Mucosa of descending colon (tissue), 3 donors: ENCODE measurements at regions of chr12 and their contacts with region 1.

Region 1: GRCh38 chr12:93569656-93570551 is 2.6 kb upstream of the SOCS2 start:
- DNase-seq: peak; percentile 89 to 92 (median 92)
- ATAC-seq: peak; percentile 77
- H3K4me3 ChIP-seq: peak overlapping the region; percentile 56
- H3K4me1 ChIP-seq: peaks cover 6% of the 10 kb centered on the region
- CTCF ChIP-seq: peak; percentile 84

Region 2: GRCh38 chr12:93624595-93625294 is 54.8 kb after region 1 on chr12:
- intact Hi-C with region 1: no loop called
- DNase-seq: no peak
- ATAC-seq: peak; percentile 44
- H3K4me3 ChIP-seq: no peak overlapping the region
- H3K4me1 ChIP-seq: no peaks in the 10 kb centered on the region
- CTCF ChIP-seq: no peak

Region 3: DNA sequence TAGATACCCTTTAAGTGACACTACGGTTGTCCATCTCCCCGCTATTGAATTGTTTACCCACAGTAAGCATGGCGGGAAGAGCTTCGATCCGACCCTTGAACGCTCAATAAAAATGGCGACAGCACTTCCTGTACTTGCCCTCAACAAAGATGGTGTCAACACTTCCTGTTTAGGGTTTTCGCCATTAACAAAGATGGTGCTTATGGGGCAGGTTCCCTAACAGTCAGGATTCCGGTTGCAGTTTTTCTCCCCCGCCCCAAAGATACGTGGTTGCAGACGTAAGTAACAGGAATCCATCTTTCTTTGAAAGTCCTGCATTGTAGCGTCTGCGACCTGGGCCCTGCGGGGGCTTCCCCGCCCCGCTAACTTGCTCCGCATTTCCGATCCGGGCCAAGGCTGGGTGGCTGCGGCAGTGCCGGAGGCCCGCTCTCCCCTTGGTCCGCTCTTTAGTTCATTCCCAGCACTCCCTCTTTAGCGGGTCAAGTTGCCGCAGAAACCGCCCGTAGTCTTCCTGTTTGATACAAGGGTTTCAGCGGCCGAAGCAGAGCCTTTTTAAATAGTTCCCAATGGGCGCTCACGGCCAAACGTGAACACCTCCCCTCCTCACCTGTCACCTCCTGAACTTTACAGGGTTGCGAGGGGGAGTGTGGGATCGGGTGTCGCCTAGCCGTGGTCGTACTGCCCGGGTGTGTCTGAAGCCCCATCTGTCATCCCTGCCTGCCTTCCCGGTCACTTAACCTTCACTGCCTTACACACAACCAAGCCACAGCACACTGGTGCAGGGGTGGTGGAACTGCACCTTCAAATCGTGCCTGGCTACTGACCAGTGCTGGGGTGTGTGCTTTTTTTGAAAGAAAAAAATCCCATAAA is 107.5 kb after region 1 on chr12 and contains the start of gene CRADD:
- intact Hi-C with region 1: loop called in 1 of 2 experiments (anchors 5 kb)
- DNase-seq: peak; percentile 80 to 86 (median 83)
- ATAC-seq: peak; percentile 97
- H3K4me3 ChIP-seq: peak within 1 kb of the TSS; percentile 27
- H3K4me1 ChIP-seq: peaks cover 4% of the 10 kb centered on the region
- CTCF ChIP-seq: no peak
- total RNA-seq, gene CRADD: 18.4 to 27.9 (median 22.7) TPM

Region 4: DNA sequence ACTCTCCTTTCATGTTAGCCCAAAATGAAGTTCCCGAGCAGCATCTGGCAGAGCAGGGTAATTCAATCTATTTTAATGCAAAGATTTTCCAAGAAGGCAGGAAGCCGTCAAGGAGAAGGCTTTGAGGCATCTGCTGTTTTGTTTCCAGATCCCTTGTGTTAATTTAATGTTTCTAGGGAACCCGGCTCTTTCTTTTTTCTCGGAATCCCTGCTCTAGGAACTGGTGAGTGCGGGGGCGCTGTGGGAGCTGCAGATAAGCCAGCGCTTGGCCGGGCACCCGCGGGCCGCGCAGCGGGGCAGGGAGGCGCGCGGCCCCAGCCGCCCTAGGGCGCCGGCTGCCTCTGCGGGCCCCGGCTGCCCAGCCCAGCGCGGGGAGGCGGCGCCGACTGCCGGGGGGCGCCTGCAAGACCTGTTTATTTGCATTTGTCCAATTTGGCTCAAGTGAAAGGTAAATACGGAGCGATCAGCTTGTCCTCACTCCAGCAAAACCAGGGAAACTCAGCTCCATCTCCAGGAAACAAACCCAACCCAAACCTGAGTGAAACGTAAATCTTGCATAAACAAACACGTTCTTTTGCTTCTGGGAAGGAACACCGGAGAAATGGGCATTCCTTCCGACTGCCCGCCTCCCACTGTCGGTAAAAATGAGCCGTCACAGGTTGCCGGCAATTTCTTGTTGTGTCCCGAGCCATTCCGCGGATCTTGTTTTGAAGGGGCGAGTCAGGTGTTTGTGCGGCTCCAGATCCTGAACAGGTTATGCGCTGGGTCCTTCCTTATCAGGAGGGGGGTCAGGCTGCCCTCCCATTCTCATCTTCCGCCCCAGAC is 172.4 kb after region 1 on chr12:
- intact Hi-C with region 1: loop called (anchors 5 kb)
- DNase-seq: peak; percentile 72 to 78 (median 75)
- ATAC-seq: peak; percentile 96
- H3K4me3 ChIP-seq: peak overlapping the region; percentile 30
- H3K4me1 ChIP-seq: peaks cover 9% of the 10 kb centered on the region
- CTCF ChIP-seq: no peak

Region 5: DNA sequence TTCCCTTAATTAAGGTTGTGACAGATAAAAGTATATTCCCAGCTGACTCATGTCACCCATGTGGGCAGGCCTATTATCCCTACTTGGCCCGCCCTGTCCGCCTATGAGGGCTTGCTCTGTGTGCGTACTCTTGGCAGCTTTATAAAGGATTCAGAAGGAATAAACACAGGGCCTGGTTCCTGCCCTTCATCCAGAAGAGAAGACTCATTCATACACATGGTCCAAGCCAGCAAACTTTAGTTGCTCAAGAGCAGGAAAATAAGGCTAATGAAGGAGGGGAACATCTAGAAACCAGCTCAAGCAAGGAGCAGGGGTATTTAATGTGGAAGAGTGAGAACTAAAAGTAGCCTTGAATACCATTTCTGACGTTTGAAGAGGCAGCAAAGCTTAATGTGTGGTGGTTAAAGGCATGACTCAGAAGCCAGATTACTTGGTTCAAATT is 249.2 kb after region 1 on chr12:
- intact Hi-C with region 1: no loop called
- DNase-seq: peak; percentile 25 to 56 (median 35)
- ATAC-seq: peak; percentile 72
- H3K4me3 ChIP-seq: no peak overlapping the region
- H3K4me1 ChIP-seq: no peaks in the 10 kb centered on the region
- CTCF ChIP-seq: no peak

Region 6: GRCh38 chr12:94074980-94075928 is 505.4 kb after region 1 on chr12:
- intact Hi-C with region 1: loop called in 1 of 2 experiments (anchors 10 kb)
- DNase-seq: peak in 1 of 3 donors; percentile 40
- ATAC-seq: peak; percentile 34
- H3K4me3 ChIP-seq: no peak overlapping the region
- H3K4me1 ChIP-seq: peaks cover 25% of the 10 kb centered on the region
- CTCF ChIP-seq: no peak

Region 7: GRCh38 chr12:94101738-94102660 is 532.1 kb after region 1 on chr12:
- intact Hi-C with region 1: loop called (anchors 5 to 10 kb)
- DNase-seq: peak; percentile 85 to 95 (median 87)
- ATAC-seq: peak; percentile 90
- H3K4me3 ChIP-seq: peak overlapping the region; percentile 12
- H3K4me1 ChIP-seq: no peaks in the 10 kb centered on the region
- CTCF ChIP-seq: peak; percentile 56